Motor neuron (in vitro differentiated cells): ENCODE measurements at regions of chr12 and their contacts with region 1.

Region 1: DNA sequence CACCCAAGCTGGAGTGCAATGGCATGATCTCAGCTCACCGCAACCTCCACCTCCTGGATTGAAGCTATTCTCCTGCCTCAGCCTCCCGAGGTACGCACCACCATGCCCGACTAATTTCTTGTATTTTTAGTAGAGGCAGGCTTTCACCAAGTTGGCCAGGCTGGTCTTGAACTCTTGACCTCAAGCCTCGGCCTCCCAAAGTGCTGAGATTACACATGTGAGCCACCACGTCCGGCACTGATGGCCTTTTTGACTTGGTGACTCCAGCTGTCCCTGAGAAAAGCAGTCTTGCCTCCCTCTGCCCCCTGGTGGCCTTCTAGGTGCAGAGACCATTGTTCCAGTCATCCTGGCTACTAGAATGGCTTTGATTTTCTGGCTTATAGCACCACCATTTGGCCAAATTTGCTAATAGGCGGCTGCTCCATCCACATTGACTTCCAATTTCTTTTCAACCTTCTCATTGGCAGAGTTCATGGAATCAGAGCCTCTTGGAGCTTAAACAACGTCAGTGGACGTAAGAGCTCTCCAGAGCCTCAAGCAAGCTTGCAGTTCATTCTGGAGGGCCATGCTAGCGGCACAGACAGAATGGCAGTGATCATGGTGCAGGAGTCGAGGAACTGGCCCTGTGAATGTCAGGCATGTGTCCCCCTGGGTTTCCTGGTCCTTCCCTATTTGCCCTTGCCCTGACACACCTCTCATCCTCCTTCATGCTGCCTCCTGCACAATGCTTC is 25.4 kb upstream of the EIF4B start:
- ATAC-seq: peak; percentile 92 to 97 (median 94)
- H3K4me3 ChIP-seq: no peak overlapping the region
- H3K27ac ChIP-seq: no peak overlapping the region
- H3K4me1 ChIP-seq: peaks cover 0 to 7% of the 10 kb centered on the region in 2 donors

Region 2: GRCh38 chr12:52139552-52140062 is 841.3 kb before region 1 on chr12:
- in situ Hi-C with region 1: loop called in 1 of 9 experiments (anchors 25 kb)
- ATAC-seq: peak in 3 of 8 experiments; percentile 13 to 82 (median 30)
- H3K4me3 ChIP-seq: no peak overlapping the region
- H3K27ac ChIP-seq: no peak overlapping the region
- H3K4me1 ChIP-seq: peaks cover 0 to 11% of the 10 kb centered on the region in 2 donors

Region 3: DNA sequence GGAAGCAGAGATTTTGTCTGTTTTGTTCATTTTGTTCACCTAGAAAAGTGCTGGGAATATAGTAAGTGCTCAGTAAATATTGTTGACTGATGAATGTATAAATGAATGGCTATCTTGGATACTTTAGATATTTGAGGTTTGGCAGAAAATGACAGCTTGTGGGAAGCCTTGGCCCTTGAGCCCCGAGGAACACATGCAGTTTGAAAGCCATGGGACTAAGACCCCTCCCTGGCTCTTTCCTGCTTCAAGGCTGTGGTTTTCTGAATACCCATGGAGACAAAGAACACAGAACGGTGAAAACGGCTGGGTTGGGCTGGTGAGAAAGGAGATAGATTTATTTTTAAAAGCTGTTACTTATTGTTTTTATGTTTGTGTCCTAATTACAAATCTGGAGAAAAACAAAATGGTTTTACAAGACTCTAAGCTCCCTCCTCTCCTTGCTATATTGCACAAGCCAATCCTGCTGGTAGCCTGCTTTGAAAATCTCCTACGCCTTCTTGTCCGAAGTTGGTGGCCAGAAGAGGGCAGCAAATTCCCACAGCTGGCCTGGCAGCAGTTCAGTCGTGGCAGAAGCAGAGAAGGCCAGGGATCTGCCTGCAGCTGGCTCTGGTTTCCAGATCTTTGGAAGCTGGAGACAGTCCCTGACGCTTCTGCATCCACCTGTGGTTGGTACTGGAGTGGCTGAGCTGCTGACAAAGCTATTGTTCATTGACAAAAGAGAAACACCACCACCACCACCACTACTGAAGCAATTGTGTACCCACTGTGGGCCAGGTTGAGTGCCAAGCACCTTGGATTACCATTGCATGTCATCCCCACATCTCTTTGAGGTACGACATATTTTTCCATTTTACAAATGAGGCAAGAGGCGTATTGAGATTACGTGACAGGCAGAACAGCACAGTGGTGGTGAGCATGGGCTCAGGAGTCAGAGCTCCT is 608.4 kb before region 1 on chr12:
- in situ Hi-C with region 1: loop called in 3 of 9 experiments (anchors 25 kb)
- ATAC-seq: peak; percentile 62 to 97 (median 76)
- H3K4me3 ChIP-seq: no peak overlapping the region
- H3K27ac ChIP-seq: no peak overlapping the region
- H3K4me1 ChIP-seq: no peaks in the 10 kb centered on the region

Region 4: GRCh38 chr12:52380271-52380694 is 600.6 kb before region 1 on chr12:
- in situ Hi-C with region 1: loop called in 2 of 9 experiments (anchors 25 kb)
- ATAC-seq: peak in 4 of 8 experiments; percentile 33 to 67 (median 46)
- H3K4me3 ChIP-seq: no peak overlapping the region
- H3K27ac ChIP-seq: no peak overlapping the region
- H3K4me1 ChIP-seq: no peaks in the 10 kb centered on the region

Region 5: DNA sequence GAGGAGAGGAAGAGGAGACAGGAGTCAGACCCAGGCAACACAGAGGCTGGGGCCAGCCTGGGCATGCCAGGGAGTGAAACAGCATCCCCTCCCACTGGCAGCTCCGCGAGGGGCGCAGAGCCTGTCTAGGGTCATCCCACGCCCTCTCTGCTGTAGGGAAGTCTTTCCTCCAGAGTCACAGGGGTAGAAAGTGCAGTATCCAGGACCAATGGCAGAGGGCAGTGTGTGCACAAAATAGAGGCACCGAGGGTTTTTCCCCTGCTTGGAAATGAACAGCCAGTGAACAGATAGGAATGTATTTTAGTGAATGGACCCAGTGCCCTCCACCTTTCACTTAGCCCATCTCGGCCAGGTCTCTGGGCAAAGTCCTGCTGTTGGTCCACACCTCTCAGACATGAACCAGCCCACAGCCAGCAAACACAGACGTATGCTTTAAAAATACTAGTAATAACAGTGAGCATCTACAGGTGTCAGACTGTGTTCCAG is 397.8 kb before region 1 on chr12:
- in situ Hi-C with region 1: loop called in 4 of 9 experiments (anchors 25 kb)
- ATAC-seq: peak; percentile 50 to 91 (median 74)
- H3K4me3 ChIP-seq: no peak overlapping the region
- H3K27ac ChIP-seq: no peak overlapping the region
- H3K4me1 ChIP-seq: no peaks in the 10 kb centered on the region

Region 6: DNA sequence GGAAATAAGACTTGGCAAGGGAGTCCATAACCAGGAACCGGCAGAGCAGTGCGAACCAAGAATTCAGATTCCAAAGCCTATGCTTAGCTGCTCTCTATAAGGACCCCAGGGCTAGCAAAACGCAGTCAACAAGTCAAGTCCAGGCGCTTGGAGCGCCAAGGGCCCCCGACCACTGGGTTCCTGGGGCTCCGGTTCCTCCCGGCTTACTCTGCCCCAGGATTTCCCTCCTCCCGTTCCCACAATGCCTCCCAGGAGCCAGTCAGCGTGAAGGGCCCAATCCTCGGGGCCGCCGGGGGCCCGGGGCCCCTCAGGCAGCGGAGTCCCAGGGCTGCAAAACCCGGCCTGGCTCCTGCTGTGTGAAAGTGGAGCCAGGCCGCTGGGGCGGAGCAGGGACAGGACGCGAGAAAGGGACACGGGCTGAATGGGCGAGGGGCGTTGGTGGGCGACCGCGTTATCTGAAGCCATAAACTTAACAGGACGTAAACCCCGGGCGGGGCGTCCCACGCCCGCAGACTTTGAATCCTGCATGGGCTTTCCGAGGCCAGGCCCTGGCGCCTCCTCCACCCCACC is 77.5 kb before region 1 on chr12:
- in situ Hi-C with region 1: no loop called
- ATAC-seq: peak; percentile 34 to 91 (median 66)
- H3K4me3 ChIP-seq: peak overlapping the region; percentile 10 to 31 (median 27)
- H3K27ac ChIP-seq: peak overlapping the region in 1 of 2 donors; percentile 78
- H3K4me1 ChIP-seq: peaks cover 31 to 40% of the 10 kb centered on the region in 2 donors

Region 7: GRCh38 chr12:53551889-53552291 is 571.0 kb after region 1 on chr12:
- in situ Hi-C with region 1: no loop called
- ATAC-seq: peak in 1 of 8 experiments; percentile 65
- H3K4me3 ChIP-seq: no peak overlapping the region
- H3K27ac ChIP-seq: no peak overlapping the region
- H3K4me1 ChIP-seq: no peaks in the 10 kb centered on the region